ENCODE measurements at regions of chr19 and their contacts with region 1.

Region 1: GRCh38 chr19:45178262-45179071 is at the start of gene BLOC1S3:
- DNase-seq: peak; percentile 100
- ATAC-seq: peak; percentile 90
- H3K4me3 Mint-ChIP-seq: peak within 1 kb of the TSS; percentile 91
- H3K27ac Mint-ChIP-seq: peak within 1 kb of the TSS; percentile 94
- H3K4me1 Mint-ChIP-seq: peaks cover 29% of the 10 kb centered on the region
- H3K27me3 Mint-ChIP-seq: no peaks in the 10 kb centered on the region
- total RNA-seq, gene BLOC1S3: 10.7 to 11.2 TPM

Region 2: DNA sequence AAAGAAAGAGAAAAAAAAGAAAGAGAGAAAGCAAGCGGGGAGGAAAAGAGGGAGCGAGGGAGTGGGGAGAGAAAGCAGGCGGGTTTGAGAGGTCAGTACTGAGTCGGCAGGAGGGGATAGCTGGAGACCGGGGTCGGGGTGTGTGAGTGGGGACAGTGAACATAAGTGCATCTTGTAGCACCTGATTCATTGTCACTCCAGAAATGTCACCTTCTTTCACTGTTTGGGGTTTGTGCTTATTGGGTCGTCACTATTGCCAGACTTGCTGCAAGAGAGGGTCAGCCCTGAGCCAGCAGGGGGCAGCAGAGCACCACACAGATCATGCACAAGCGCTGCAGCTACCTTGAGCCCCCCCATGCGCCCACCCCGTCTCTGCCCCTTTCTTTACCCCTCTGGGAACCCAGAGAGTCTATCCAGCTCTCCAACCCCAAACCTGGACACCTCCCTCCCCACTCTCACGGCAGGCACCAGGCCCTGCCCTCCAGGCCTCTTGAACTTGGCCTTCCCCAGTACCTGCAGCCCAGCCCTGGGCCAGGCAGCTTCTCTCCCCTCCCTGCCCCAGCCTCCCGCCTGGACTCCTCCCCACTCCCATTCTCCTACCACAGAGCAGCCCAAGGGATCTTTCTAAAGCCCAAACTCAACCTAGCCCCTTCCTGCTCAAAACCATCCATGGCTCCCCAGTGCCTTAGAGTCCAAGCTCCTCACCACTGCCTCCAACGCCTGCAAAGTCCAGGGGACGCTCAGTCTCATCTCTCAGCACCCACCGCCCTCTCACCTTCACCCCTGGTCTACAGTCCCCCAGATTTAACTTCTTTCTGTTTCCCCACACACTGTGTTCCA is 489.2 kb before region 1 on chr19:
- CTCF ChIA-PET with region 1: no interaction called
- POLR2A ChIA-PET with region 1: no interaction called
- intact Hi-C with region 1: loop called in 1 of 2 experiments (anchors 1 kb)
- DNase-seq: peak; percentile 90
- ATAC-seq: peak; percentile 39
- H3K4me3 Mint-ChIP-seq: no peak overlapping the region
- H3K27ac Mint-ChIP-seq: no peak overlapping the region
- H3K4me1 Mint-ChIP-seq: peaks cover 42% of the 10 kb centered on the region
- H3K27me3 Mint-ChIP-seq: peaks cover 17% of the 10 kb centered on the region

Region 3: GRCh38 chr19:44890366-44891015 is 288.0 kb before region 1 on chr19:
- CTCF ChIA-PET with region 1: no interaction called
- POLR2A ChIA-PET with region 1: interaction called, 5 read pairs
- intact Hi-C with region 1: loop called (anchors 1 kb)
- DNase-seq: no peak
- ATAC-seq: peak; percentile 84
- H3K4me3 Mint-ChIP-seq: peak overlapping the region; percentile 74
- H3K27ac Mint-ChIP-seq: peak overlapping the region; percentile 96
- H3K4me1 Mint-ChIP-seq: peaks cover 29% of the 10 kb centered on the region
- H3K27me3 Mint-ChIP-seq: no peaks in the 10 kb centered on the region

Region 4: GRCh38 chr19:44925114-44925891 is 253.2 kb before region 1 on chr19:
- CTCF ChIA-PET with region 1: no interaction called
- POLR2A ChIA-PET with region 1: no interaction called
- intact Hi-C with region 1: no loop called
- DNase-seq: no peak
- ATAC-seq: no peak
- H3K4me3 Mint-ChIP-seq: no peak overlapping the region
- H3K27ac Mint-ChIP-seq: no peak overlapping the region
- H3K4me1 Mint-ChIP-seq: peaks cover 4% of the 10 kb centered on the region
- H3K27me3 Mint-ChIP-seq: peaks cover 17% of the 10 kb centered on the region

Region 5: GRCh38 chr19:45079063-45079910 is 99.2 kb before region 1 on chr19 and contains the start of gene GEMIN7:
- CTCF ChIA-PET with region 1: interaction called, 3 read pairs
- POLR2A ChIA-PET with region 1: interaction called, 3 read pairs
- intact Hi-C with region 1: loop called (anchors 1 to 5 kb)
- DNase-seq: peak; percentile 90
- ATAC-seq: peak; percentile 65
- H3K4me3 Mint-ChIP-seq: peak within 1 kb of the TSS; percentile 99
- H3K27ac Mint-ChIP-seq: peak within 1 kb of the TSS; percentile 88
- H3K4me1 Mint-ChIP-seq: peaks cover 43% of the 10 kb centered on the region
- H3K27me3 Mint-ChIP-seq: no peaks in the 10 kb centered on the region
- total RNA-seq, gene GEMIN7: 35.4 to 35.5 TPM

Region 6: DNA sequence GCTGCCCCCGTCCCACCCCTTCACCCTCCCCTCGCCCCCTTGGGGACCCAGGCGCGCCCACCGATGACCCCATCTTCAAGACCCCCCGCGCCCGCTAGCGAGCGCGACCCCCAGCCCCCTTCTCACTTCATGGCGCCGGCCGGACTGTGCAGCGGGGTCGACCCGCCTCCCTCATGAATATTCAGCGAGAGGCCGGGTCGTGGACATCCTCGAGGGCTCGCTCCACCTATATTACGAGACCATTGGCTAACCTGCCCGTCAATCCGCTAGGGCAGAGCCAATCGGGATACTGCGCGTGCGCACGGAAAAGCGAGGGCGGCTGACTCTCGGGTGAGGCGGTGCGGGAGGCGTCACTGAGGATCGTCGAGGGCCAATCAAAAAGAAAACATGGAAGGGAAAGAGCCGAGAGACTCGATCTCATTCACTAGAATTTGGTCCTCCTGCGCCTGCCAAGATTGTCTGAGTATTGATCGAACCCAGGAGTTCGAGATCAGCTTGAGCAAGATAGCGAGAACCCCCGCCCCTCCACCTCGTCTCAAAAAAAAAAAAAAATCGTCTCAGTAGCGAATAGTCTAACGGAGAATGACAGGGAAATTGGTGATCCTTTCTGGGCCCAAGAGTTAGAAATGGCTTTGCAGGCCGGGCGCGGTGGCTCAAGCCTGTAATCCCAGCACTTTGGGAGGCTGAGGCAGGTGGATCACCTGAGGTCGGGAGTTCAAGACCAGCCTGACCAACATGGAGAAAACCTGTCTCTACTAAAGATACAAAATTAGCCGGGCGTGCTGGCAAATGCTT is 192.1 kb after region 1 on chr19 and contains the start of gene ERCC2:
- CTCF ChIA-PET with region 1: no interaction called
- POLR2A ChIA-PET with region 1: no interaction called
- intact Hi-C with region 1: loop called in 1 of 2 experiments (anchors 1 kb)
- DNase-seq: peak; percentile 100
- ATAC-seq: peak; percentile 100
- H3K4me3 Mint-ChIP-seq: peak within 1 kb of the TSS; percentile 79
- H3K27ac Mint-ChIP-seq: peak within 1 kb of the TSS; percentile 97
- H3K4me1 Mint-ChIP-seq: peaks cover 8% of the 10 kb centered on the region
- H3K27me3 Mint-ChIP-seq: no peaks in the 10 kb centered on the region
- total RNA-seq, gene ERCC2: 27.5 to 30.4 TPM

Region 7: DNA sequence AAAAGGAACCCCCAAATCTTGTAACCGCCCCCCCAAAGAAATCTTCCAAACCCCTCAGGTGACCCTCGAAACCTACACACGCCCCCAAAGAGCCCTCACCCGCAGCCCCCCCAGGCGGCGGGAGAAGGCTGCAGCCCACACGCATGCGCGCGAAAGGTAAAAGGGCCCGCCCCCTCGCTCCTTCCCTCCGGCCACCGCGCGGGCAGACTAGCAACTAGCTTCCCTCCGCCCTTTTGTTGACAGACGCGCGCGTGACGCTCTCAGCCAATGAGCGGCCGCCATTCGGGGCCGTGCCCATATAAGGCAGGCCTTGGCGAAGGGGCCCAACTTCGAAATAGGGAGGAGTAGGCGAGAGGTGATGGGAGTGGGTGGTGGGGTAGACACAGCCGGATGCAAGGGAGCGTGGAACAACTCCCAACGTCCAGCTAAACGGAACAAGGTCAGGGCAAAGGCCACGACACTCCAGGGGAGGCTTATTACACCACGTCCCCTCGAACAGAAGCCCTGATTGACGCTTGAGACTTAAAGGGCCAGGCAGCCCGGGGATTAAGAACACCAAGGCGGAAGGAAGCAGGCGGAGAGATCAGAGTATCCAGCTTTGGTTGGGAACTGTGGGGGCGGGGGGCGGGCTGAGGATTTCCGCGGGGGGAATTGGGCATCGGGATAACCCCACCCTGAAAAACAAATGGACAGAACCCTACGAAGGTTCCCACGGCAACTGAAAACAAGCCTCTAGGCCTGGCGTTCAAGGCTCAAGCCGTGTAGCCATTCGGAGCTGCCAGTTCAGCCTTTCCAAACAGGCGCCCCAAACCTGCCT is 538.9 kb after region 1 on chr19:
- CTCF ChIA-PET with region 1: no interaction called
- POLR2A ChIA-PET with region 1: no interaction called
- intact Hi-C with region 1: loop called in 1 of 2 experiments (anchors 5 kb)
- DNase-seq: peak; percentile 99
- ATAC-seq: peak; percentile 97
- H3K4me3 Mint-ChIP-seq: peak overlapping the region; percentile 93
- H3K27ac Mint-ChIP-seq: peak overlapping the region; percentile 94
- H3K4me1 Mint-ChIP-seq: peaks cover 40% of the 10 kb centered on the region
- H3K27me3 Mint-ChIP-seq: no peaks in the 10 kb centered on the region

Region 8: DNA sequence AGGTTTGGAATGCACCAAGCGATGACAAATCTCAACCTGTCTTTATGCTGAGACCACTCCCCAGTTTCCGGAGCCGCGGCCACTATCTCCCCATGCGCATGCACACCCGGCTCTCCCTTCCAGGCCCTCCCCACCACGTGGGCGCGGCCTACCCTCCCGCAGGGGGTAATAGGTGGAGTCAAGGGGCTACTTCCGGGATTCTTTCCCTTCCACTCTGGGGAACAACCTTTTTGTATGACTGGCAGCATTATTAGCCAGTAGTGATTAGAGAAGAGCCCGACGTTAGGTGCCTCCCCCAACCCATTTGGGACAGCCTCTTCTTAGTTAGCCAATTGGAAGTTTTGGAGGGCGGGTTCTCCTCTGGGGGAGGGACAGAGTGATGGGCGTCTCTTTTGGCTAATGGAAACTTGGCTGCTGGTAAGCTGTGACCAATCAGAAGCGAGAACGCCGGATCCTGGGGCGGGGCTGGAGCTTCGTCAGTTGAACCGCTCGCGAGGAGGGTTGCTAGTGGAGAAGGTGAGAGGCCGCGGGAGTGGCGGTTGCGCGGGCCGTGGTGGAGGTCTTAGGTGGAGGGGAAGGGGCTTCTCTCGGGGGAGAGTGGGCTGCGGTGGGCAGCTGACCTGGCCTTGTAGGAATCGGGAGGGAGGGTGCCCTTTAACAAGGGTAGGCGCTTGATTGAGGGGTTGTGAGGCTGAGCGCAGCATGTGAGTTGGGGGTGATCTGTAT is 816.7 kb after region 1 on chr19 and contains the start of gene CCDC61:
- CTCF ChIA-PET with region 1: no interaction called
- POLR2A ChIA-PET with region 1: no interaction called
- intact Hi-C with region 1: loop called in 1 of 2 experiments (anchors 1 kb)
- DNase-seq: peak; percentile 96
- ATAC-seq: peak; percentile 98
- H3K4me3 Mint-ChIP-seq: no peak within 1 kb of the TSS
- H3K27ac Mint-ChIP-seq: no peak within 1 kb of the TSS
- H3K4me1 Mint-ChIP-seq: peaks cover 22% of the 10 kb centered on the region
- H3K27me3 Mint-ChIP-seq: peaks cover 7% of the 10 kb centered on the region
- total RNA-seq, gene CCDC61: 22.4 to 26.2 TPM